WTC11 (cell line): ENCODE measurements at regions of chr1 and their contacts with region 1.

Region 1: DNA sequence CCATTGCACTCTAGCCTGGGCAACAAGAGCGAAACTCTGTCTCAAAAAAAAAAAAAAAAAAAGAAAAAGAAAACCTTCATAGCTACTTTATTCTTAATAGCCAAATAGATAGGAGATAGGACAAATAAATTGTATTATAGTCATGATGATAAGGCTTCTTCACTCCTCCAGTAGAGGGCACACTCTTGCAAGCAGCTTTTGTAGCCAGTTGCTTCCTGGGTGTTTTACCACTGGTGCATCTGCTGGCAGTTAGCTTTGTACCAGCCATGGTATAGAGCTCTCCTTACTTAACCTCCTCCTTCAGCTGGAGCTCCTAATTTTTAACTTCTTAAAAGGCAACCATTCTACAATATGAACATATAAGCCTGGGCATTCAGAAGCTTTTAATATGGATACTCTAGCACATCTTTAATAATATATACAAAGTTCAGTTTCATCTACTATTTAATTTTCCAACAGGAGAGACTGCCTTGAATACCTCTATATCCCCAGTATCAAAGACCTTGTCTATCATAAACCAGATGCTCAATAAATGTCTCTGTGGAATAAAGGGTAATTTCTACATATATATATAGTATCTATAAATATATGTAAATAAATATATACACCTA is 35.8 kb downstream of the EVI5 start:
- DNase-seq: peak; percentile 26
- ATAC-seq: peak; percentile 89
- H3K4me3 Mint-ChIP-seq: no peak overlapping the region
- H3K27ac Mint-ChIP-seq: no peak overlapping the region
- H3K4me1 Mint-ChIP-seq: no peaks in the 10 kb centered on the region
- H3K27me3 Mint-ChIP-seq: no peaks in the 10 kb centered on the region
- CTCF ChIP-seq: peak; percentile 34; the same call in 1 of the 2 replicates

Region 2: DNA sequence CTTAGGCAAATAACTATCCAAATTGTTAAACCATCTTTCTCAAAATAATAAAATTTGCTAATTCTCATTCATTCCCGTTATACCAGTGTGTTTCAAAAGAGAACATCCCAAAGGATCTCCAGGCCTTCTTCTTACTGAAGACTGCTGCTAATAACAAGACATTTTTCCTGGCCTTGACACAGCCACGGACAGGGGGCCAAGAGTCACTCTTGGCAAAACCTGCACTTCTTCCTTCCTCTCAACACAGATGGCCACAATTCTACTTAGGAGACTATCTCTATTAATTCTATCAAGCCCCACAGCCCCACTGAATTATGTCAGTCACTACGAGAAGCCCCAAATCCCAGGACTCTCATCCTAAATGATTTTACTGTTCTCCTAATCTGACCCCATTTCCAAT is 50.2 kb before region 1 on chr1:
- CTCF ChIA-PET with region 1: no interaction called
- POLR2A ChIA-PET with region 1: no interaction called
- DNase-seq: no peak
- ATAC-seq: no peak
- H3K4me3 Mint-ChIP-seq: no peak overlapping the region
- H3K27ac Mint-ChIP-seq: no peak overlapping the region
- H3K4me1 Mint-ChIP-seq: no peaks in the 10 kb centered on the region
- H3K27me3 Mint-ChIP-seq: no peaks in the 10 kb centered on the region
- CTCF ChIP-seq: no peak

Region 3: DNA sequence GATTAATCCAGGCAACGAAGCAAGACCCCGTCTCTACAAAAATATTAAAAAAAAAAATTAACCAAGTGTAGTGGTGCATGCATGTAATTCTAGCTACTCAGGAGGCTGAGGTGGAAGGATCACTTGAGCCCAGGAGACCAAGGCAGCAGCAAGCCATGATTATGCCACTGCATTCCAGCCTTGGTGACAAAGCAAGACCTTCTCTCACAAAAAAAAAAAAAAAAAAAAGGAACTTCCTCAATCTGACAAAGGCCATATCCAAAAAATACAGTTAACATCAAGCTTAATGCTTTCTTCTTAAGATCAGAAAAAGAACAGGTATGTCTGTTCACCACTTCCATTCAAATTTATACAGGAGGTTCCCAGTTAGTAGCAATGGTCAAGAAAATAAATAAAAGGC is 18.7 kb before region 1 on chr1:
- CTCF ChIA-PET with region 1: interaction called, 22 read pairs
- POLR2A ChIA-PET with region 1: no interaction called
- DNase-seq: no peak
- ATAC-seq: no peak
- H3K4me3 Mint-ChIP-seq: no peak overlapping the region
- H3K27ac Mint-ChIP-seq: no peak overlapping the region
- H3K4me1 Mint-ChIP-seq: peaks cover 8% of the 10 kb centered on the region
- H3K27me3 Mint-ChIP-seq: no peaks in the 10 kb centered on the region
- CTCF ChIP-seq: no peak

Region 4: GRCh38 chr1:92736395-92736794 is 12.7 kb before region 1 on chr1:
- CTCF ChIA-PET with region 1: interaction called, 22 read pairs
- POLR2A ChIA-PET with region 1: no interaction called
- DNase-seq: no peak
- ATAC-seq: peak; percentile 77
- H3K4me3 Mint-ChIP-seq: no peak overlapping the region
- H3K27ac Mint-ChIP-seq: no peak overlapping the region
- H3K4me1 Mint-ChIP-seq: peaks cover 2% of the 10 kb centered on the region
- H3K27me3 Mint-ChIP-seq: no peaks in the 10 kb centered on the region
- CTCF ChIP-seq: no peak

Region 5: DNA sequence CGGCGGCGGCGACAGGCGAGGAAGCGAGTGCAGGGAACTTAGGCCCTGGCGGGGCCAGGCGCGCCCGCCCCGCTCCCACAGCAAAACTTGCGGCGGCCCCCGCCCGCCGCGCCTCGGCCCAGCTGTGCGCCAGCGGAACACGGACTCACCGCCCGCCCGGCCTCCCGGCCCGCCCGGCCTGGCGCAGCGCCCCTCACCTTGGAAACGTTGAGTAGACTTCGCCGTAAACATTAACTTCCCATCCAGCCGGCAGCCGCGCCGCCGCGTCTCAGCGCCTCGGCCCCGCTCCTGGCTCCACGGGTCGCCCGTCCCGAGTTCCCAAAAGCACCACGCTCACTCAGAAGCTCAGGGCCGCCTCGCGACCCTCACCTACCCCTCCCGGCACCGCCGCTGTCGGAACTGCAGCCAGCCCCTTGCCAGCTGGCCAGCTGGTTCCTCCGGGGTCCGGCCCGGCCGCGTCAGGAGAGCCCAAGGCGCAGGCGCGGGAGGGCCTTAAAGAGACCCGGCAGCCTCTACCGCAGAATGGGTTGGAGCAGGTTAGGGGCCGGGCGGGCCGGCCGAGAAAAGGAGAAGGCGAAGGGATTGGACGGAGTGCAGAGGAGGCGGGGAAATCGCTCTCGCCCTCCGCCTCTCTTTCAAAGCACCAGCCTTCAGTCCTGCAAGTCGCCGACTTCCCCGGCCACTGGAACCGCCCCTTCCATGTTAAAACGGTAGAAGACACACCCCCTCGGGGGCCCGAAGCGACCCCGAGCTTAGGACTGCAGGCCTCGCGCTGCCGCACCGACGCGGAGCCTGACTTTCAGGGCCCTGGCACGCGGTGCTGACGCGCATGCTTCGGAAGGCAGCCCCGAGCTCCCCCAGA is 35.7 kb after region 1 on chr1 and contains the start of gene EVI5:
- CTCF ChIA-PET with region 1: interaction called, 16 read pairs
- POLR2A ChIA-PET with region 1: no interaction called
- DNase-seq: peak; percentile 97
- ATAC-seq: peak; percentile 99
- H3K4me3 Mint-ChIP-seq: peak within 1 kb of the TSS; percentile 80
- H3K27ac Mint-ChIP-seq: peak within 1 kb of the TSS; percentile 30; the same call in 1 of the 2 replicates
- H3K4me1 Mint-ChIP-seq: peaks cover 16% of the 10 kb centered on the region
- H3K27me3 Mint-ChIP-seq: peaks cover 24% of the 10 kb centered on the region
- CTCF ChIP-seq: no peak
- total RNA-seq, gene EVI5: 11.4 to 15.5 TPM (median 14.3 TPM) in 3 replicates

Region 6: GRCh38 chr1:92792340-92792782 is 43.2 kb after region 1 on chr1:
- CTCF ChIA-PET with region 1: interaction called, 10 read pairs
- POLR2A ChIA-PET with region 1: no interaction called
- DNase-seq: no peak
- ATAC-seq: peak; percentile 88
- H3K4me3 Mint-ChIP-seq: no peak overlapping the region
- H3K27ac Mint-ChIP-seq: no peak overlapping the region
- H3K4me1 Mint-ChIP-seq: peaks cover 22% of the 10 kb centered on the region
- H3K27me3 Mint-ChIP-seq: peaks cover 4% of the 10 kb centered on the region
- CTCF ChIP-seq: no peak

Region 7: DNA sequence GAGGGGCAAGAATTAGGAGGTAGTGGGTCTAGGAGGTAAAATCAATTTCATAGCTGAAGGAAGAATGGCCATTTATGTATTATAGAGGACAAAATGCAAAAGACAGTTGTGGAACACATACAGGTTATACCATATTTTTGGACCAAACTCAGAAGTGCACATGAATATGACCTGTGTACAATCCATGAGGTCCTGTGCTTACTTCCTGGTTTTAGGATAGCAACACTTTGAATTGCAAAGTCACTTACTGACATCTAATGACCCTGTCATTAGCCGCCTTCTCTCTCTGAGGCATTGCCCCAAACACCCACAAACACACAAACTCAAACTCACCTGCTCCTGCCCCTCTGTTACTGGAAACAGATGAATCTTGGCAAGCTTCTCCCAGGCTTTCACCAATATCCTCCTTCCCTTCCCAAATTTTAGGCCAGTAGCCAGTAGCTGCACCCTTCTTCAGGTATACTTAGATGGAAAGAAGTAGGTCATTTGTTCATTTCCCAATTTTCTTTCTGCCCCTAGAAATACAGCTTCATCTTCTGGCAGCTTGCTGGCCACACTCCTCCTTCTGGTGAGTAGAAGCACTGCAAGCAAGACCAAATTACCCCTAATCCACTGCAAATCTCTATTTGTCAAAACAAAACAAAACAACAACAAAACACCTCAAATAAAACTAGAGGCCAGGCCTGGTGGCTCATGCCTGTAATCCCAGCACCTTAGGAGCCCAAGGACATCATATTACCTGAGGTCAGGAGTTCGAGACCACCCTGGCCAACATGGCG is 69.0 kb after region 1 on chr1:
- CTCF ChIA-PET with region 1: interaction called, 99 read pairs
- POLR2A ChIA-PET with region 1: no interaction called
- DNase-seq: peak; percentile 20
- ATAC-seq: peak; percentile 80
- H3K4me3 Mint-ChIP-seq: no peak overlapping the region
- H3K27ac Mint-ChIP-seq: peak overlapping the region; percentile 44; the same call in 1 of the 2 replicates
- H3K4me1 Mint-ChIP-seq: peaks cover 2% of the 10 kb centered on the region; the same call in 1 of the 2 replicates
- H3K27me3 Mint-ChIP-seq: no peaks in the 10 kb centered on the region
- CTCF ChIP-seq: peak; percentile 40

Region 8: GRCh38 chr1:92831762-92832536 is 82.8 kb after region 1 on chr1 and contains the start of gene RPL5:
- CTCF ChIA-PET with region 1: interaction called, 27 read pairs
- POLR2A ChIA-PET with region 1: no interaction called
- DNase-seq: peak; percentile 97
- ATAC-seq: peak; percentile 93
- H3K4me3 Mint-ChIP-seq: peak within 1 kb of the TSS; percentile 95
- H3K27ac Mint-ChIP-seq: peak within 1 kb of the TSS; percentile 97
- H3K4me1 Mint-ChIP-seq: peaks cover 35% of the 10 kb centered on the region
- H3K27me3 Mint-ChIP-seq: no peaks in the 10 kb centered on the region; the same call in 1 of the 2 replicates
- CTCF ChIP-seq: peak; percentile 81
- total RNA-seq, gene RPL5: 1,430 to 1,486 TPM (median 1,433 TPM) in 3 replicates